ENCODE measurements at regions of chr3 and their contacts with region 1.

Region 1: DNA sequence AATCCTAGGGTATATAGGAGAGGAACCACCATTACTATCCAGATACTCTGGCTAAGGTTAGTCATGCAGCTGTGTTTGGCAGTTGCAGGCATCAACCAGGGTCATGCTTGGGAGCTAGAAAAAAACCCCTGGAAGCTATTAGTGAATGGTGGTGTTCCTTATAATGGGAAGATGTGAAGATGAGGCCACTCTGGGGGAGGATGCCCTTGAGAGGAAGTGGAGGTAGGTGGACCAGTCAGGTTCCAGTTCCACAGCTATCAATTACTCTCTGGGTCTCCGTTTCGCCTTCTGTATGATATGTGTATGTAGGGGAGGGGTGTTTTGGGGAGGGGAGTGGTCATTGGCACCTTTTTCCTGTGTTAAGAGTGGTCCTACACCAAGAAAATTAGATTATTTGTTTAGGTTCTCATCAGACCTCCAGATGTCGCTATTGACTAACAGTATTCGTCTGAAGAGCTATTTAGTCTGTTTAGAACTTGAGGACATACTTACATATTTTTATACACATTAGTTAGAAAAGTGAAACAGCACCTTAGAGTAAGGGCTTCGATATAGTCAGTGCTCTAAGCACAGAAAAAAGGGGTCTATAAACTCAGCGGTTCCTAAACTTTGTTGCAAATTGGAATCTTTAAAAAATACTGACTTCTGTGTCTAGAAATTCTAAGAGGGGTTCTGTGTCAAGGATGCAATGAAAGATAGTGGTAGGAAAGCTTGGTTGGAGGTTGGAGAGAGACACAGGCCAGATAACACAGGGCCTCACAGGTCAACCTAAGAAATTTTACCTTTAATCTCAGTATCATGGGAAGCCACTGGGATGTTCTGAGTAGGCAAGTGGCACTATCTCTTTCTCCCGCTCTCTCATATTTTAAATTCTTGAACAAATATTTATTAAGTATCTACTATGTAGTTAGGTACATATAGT is 9.1 kb upstream of the HPS3 start:
- DNase-seq: no peak
- ATAC-seq: peak; percentile 83
- H3K4me3 Mint-ChIP-seq: no peak overlapping the region
- H3K27ac Mint-ChIP-seq: no peak overlapping the region
- H3K4me1 Mint-ChIP-seq: peaks cover 5% of the 10 kb centered on the region
- H3K27me3 Mint-ChIP-seq: peaks cover 2% of the 10 kb centered on the region

Region 2: DNA sequence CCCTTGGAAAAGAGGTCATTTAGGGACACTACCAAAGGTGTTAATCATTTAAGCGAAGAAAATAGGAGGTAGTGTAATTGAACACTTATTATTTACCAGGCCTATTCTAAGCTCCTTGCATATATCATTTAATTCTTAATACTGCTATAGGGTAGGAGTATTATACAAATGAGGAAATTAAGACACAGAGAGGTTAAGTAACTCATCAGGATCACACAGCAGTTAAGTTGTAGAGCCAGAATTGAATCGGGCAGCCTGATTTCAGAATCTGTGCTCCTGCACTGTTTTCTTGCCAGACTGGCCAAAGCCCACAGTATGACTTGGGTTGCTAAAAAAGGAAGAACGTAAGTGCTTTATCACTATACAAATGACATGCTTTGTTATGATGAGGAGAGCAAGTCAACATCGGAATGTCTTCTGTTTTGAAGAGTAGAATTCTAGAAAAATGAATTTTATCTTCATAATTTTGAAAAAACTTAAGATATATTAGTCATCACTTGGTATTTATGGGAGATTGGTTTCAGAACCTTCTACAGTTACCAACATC is 40.5 kb after region 1 on chr3:
- CTCF ChIA-PET with region 1: no interaction called
- DNase-seq: no peak
- ATAC-seq: no peak
- H3K4me3 Mint-ChIP-seq: no peak overlapping the region
- H3K27ac Mint-ChIP-seq: no peak overlapping the region
- H3K4me1 Mint-ChIP-seq: peaks cover 8% of the 10 kb centered on the region
- H3K27me3 Mint-ChIP-seq: no peaks in the 10 kb centered on the region

Region 3: DNA sequence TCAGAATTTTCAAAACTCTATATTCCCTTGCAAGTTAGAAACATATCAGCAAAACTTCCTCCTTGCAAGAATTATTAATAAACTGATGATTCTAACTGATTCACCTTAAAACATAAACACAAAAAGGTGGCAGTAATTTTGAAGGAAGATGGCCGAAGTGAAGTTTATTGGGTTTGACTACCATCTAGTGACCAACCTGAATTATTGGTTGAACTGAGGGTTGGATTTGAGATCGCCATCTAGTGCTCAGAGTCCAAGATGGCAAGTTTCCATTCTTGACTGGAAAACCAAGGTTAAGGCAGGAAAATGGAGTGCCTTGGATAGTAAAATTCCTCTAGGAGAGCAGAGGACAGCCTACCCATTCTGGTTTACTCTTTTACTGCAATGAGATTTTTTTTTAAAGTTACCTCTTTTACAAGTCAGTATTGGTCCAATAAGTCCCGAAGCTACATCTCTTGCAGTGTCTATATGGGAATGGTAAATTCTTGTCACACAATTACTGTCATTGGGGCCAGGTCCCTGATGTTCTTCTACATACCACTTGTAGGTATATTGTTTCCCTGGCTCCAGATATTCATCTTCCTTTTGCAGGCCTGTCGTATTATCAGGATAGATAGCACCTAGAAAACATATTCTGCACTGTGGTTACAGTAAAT is 152.9 kb after region 1 on chr3:
- CTCF ChIA-PET with region 1: interaction called, 113 read pairs
- DNase-seq: peak; percentile 47
- ATAC-seq: peak; percentile 81
- H3K4me3 Mint-ChIP-seq: no peak overlapping the region
- H3K27ac Mint-ChIP-seq: no peak overlapping the region
- H3K4me1 Mint-ChIP-seq: peaks cover 13% of the 10 kb centered on the region
- H3K27me3 Mint-ChIP-seq: peaks cover 3% of the 10 kb centered on the region

Region 4: GRCh38 chr3:149280671-149281349 is 160.5 kb after region 1 on chr3:
- CTCF ChIA-PET with region 1: interaction called, 113 read pairs
- DNase-seq: no peak
- ATAC-seq: no peak
- H3K4me3 Mint-ChIP-seq: no peak overlapping the region
- H3K27ac Mint-ChIP-seq: no peak overlapping the region
- H3K4me1 Mint-ChIP-seq: peaks cover 13% of the 10 kb centered on the region
- H3K27me3 Mint-ChIP-seq: no peaks in the 10 kb centered on the region